ENCODE measurements at regions of chrX and their contacts with region 1.

Region 1: DNA sequence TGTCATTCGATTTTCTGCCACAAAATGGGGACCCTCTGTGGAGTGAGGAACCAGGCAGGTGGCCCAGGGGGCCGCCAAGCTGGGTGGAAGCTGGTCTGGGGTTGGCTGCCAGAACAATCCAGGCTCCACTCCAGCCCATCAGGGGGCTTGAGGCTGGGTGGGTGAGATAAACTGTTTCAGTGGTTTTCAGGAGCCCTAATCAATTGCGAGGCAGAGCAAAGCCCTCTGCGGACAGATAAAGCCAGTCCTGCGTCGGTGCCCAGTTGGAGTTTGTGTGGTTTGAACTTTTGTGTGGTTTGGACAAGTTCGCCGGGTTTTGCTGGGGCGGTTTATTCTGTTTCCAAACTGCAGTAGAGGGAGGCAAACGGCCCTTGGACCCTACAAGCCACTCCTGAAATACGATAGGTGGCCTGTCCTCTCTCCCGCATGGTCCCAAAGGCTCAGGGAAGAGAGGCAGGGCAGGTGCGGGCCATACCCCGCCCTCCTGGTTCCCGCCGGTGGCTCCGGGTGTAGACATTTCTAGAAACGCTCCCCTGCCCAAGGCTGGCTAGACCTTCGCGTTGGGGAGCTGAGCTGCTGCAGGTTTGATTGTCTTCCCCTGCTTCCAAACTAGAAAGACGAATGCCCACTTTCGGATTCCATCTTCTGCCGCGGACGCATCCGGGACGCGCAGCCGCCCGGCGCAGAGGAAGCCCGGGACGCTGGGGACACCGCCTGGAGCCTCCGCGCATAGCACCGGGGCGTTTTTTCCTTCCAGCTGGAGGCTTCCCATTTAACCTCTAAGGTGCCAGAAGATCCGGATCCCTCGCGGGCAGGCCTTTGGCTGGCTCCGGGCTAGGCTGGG is 169.0 kb upstream of the BCOR start:
- DNase-seq: peak; percentile 65 to 82
- ATAC-seq: peak; percentile 87 to 97 (median 91)
- H3K4me3 ChIP-seq: peak overlapping the region; percentile 59
- H3K27ac ChIP-seq: peak overlapping the region; percentile 50
- H3K4me1 ChIP-seq: no peaks in the 10 kb centered on the region
- H3K27me3 ChIP-seq: no peaks in the 10 kb centered on the region
- CTCF ChIP-seq: peak; percentile 62

Region 2: DNA sequence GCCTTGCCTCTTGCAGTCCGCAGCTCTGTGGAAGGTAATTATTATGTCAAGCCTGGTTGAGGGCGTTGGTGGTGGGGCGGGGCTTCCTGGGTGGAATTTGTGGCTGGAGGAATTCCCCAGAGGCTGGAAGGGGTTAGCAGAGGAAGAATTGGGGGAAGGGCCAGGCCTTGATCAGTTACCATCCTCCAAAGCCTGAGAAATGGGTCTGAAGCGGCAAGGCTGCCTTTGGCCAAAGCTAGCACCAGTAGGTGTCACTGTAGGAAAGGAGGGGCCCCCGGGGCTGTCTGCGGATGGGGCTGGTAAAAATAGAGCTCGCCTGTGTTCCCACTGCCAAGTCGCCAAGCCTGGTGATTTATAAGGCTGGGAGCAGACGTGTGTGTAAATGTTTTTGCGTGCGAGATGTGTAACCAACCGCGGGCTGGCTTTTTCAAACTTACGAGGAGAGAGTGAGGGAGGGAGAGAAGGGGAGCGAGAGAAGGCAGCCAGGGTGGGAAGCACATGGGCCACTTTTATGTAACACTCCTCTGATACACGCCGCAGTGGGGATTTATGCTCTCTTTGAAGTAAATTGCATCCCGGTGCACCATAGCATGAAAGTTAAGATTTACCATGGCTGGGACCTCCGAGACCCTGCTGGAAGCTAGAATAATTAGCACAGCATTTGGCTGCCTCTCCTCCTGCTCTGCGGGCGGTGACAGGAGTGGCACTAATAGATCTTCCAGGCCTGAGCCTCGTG is 535.9 kb before region 1 on chrX:
- intact Hi-C with region 1: loop called (anchors 5 to 10 kb)
- DNase-seq: peak; percentile 67 to 82
- ATAC-seq: peak; percentile 93 to 99 (median 96)
- H3K4me3 ChIP-seq: no peak overlapping the region
- H3K27ac ChIP-seq: no peak overlapping the region
- H3K4me1 ChIP-seq: peaks cover 8% of the 10 kb centered on the region
- H3K27me3 ChIP-seq: peaks cover 0 to 22% (median 0%) of the 10 kb centered on the region in 3 donors
- CTCF ChIP-seq: peak; percentile 55

Region 3: DNA sequence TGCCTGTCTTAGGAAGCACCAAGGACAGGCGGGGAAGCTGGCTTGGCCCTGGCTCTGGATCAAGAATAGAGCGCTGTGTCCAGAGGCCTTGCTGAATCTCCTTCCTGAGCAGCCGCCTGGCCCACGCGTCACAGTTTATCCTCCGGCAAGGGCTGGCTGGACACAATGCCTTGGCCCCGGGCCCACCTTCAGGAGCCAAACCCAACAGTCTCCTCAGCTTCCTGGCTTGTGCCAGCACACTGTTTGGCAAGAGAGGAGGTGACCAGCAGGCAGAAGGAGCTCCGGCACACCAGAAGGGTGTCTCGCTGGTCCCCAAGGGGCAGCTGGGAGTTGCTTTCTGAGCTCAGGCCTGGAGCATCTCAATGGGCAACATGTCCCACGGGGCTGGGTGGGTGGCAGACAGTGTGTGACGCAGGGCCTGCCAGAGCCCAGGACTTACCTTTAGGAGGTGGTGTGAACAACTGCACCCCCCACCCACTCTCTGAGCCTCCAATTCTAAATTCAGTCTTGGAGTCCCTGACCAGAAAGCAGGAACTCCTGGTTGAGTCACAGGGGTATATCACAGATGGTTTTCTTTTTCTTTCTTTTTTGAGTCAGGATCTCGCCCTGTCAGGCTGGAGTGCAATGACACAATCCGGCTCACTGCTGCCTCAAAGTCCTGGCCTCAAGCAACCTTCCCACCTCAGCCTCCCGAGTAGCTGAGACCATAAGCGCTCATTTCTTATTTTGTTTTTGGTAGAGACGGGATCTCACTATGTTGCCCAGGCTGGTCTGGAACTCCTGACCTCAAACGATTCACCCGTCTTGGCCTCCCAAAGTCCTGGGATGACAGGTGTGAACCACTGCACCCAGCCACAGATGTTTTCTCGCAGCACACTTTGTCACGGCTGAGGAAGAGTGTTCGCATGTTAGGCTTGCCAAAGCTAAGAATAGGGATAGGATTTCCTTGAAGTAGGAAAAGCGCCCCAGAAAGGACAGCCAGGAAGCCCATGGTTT is 530.2 kb before region 1 on chrX:
- intact Hi-C with region 1: loop called in 1 of 2 experiments (anchors 5 kb)
- DNase-seq: peak; percentile 89 to 92
- ATAC-seq: peak; percentile 89 to 97 (median 94)
- H3K4me3 ChIP-seq: no peak overlapping the region
- H3K27ac ChIP-seq: no peak overlapping the region
- H3K4me1 ChIP-seq: peaks cover 6% of the 10 kb centered on the region
- H3K27me3 ChIP-seq: peaks cover 0 to 3% (median 0%) of the 10 kb centered on the region in 3 donors
- CTCF ChIP-seq: no peak

Region 4: DNA sequence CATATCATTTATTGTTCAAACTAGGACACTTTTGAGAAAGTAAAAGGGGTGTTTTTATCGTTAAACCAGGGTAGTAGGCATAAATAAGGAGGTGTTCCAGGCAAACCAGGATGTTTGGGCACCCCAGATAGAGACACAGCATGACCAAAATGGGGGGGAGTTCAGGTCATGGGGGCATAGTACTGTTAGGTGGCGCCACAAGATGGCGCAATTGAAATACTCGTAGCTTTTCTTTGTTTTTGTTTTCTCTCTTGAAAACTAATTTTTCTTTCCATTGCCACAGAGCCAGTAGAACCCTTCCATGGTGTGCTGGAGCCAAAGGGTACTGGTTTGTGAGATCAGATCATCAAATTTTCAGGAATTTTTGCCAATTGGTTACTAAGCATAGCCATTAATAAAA is 452.3 kb before region 1 on chrX:
- intact Hi-C with region 1: loop called in 1 of 2 experiments (anchors 5 kb)
- DNase-seq: peak in 1 of 2 donors; percentile 44
- ATAC-seq: peak; percentile 50 to 70 (median 56)
- H3K4me3 ChIP-seq: no peak overlapping the region
- H3K27ac ChIP-seq: peak overlapping the region; percentile 27
- H3K4me1 ChIP-seq: no peaks in the 10 kb centered on the region
- H3K27me3 ChIP-seq: peaks cover 0 to 15% (median 0%) of the 10 kb centered on the region in 3 donors
- CTCF ChIP-seq: peak; percentile 39

Region 5: DNA sequence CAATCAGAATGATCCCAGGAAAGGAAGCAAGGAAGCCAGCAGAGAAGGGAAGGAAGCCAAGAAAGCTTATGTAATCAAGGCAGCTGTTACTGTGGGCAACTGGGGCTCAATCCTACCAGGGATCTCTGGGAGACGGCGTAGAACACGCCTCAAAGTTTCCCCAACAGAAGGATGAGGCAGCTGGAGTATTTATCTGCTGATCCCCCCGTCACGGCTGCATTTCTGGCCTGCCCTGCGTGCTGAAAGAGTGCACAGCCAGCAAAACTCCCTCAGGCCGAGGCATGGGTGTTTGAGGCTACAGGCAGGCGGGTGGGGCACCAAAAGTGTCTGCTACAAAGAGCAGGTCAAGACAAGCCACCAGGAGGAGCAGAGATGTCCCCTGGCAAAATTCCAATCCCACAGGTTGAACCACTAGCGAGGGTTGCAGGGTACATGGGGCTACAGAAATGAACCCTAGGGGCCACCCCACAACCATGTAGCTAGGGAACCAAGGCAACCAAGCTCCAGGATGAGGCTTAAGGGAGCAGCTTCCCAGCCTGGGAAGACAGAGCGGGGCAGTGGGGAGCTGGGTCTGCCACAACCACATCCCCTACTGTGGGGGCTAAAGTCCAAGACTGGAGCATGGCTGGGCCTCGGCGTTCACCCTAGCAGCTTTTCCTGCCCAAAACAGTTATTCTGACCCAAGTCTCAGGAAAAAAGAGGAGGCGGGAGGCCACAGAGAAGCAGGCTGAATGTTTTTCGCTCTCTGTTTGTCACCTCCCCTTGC is 282.3 kb before region 1 on chrX:
- intact Hi-C with region 1: loop called in 1 of 2 experiments (anchors 10 kb)
- DNase-seq: peak in 1 of 2 donors; percentile 58
- ATAC-seq: peak; percentile 28 to 58 (median 52)
- H3K4me3 ChIP-seq: no peak overlapping the region
- H3K27ac ChIP-seq: no peak overlapping the region
- H3K4me1 ChIP-seq: peaks cover 3% of the 10 kb centered on the region
- H3K27me3 ChIP-seq: peaks cover 0 to 5% (median 0%) of the 10 kb centered on the region in 3 donors
- CTCF ChIP-seq: no peak

Region 6: GRCh38 chrX:40169193-40170101 is 97.3 kb before region 1 on chrX:
- intact Hi-C with region 1: loop called in 1 of 2 experiments (anchors 5 kb)
- DNase-seq: peak; percentile 48 to 66
- ATAC-seq: no peak
- H3K4me3 ChIP-seq: no peak overlapping the region
- H3K27ac ChIP-seq: peak overlapping the region; percentile 23
- H3K4me1 ChIP-seq: peaks cover 22% of the 10 kb centered on the region
- H3K27me3 ChIP-seq: peaks cover 0 to 93% (median 0%) of the 10 kb centered on the region in 3 donors
- CTCF ChIP-seq: no peak

Region 7: GRCh38 chrX:40182095-40182494 is 84.6 kb before region 1 on chrX:
- intact Hi-C with region 1: loop called in 1 of 2 experiments (anchors 5 kb)
- DNase-seq: no peak
- ATAC-seq: no peak
- H3K4me3 ChIP-seq: no peak overlapping the region
- H3K27ac ChIP-seq: no peak overlapping the region
- H3K4me1 ChIP-seq: no peaks in the 10 kb centered on the region
- H3K27me3 ChIP-seq: peaks cover 0 to 12% (median 0%) of the 10 kb centered on the region in 3 donors
- CTCF ChIP-seq: no peak